CD8-positive, alpha-beta memory T cell (primary cell): ENCODE measurements at regions of chr5 and their contacts with region 1.

Region 1: DNA sequence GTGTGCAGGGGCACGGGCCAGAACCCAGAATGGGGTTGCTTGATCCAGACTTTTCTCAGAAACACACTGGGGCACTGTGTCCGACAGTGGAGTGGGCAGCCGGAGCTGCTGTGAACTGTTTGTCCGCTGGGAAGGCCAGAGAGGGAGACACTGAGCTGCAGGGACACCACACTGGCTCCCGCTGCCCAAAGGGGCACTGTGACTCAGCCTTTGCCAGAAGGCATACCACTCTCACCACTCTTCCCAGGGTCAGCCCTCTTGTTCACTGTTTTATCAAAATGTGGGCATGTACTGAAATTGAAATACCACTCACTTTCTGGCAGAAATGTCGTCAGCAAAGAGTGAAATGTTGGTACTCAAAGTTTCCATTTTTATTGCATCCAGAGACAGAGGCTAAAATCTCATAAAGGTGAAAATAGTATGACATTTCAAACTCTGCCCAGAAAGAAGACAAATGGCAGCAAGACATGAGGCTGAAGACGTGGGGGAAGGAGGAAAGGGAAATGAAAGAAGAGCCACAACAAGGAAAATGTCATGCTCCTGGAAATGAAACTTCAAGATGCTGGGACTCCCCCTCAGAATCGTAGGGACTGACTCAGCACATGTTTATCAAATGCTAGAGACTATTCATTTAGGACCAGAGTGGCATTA is 4.5 kb upstream of the IL7R start:
- DNase-seq: peak in 3 of 5 donors; percentile 57 to 70 (median 68)
- H3K4me3 ChIP-seq: peak overlapping the region; percentile 58
- H3K4me3 Mint-ChIP-seq: peak overlapping the region; percentile 90 to 97 (median 93)
- H3K27ac ChIP-seq: peak overlapping the region; percentile 95
- H3K27ac Mint-ChIP-seq: peak overlapping the region; percentile 94 to 100 (median 100)
- H3K4me1 ChIP-seq: peaks cover 59% of the 10 kb centered on the region
- H3K4me1 Mint-ChIP-seq: peaks cover 70 to 83% (median 72%) of the 10 kb centered on the region in 3 donors
- H3K27me3 ChIP-seq: no peaks in the 10 kb centered on the region
- H3K27me3 Mint-ChIP-seq: peaks cover 0 to 1% of the 10 kb centered on the region in 2 donors

Region 2: DNA sequence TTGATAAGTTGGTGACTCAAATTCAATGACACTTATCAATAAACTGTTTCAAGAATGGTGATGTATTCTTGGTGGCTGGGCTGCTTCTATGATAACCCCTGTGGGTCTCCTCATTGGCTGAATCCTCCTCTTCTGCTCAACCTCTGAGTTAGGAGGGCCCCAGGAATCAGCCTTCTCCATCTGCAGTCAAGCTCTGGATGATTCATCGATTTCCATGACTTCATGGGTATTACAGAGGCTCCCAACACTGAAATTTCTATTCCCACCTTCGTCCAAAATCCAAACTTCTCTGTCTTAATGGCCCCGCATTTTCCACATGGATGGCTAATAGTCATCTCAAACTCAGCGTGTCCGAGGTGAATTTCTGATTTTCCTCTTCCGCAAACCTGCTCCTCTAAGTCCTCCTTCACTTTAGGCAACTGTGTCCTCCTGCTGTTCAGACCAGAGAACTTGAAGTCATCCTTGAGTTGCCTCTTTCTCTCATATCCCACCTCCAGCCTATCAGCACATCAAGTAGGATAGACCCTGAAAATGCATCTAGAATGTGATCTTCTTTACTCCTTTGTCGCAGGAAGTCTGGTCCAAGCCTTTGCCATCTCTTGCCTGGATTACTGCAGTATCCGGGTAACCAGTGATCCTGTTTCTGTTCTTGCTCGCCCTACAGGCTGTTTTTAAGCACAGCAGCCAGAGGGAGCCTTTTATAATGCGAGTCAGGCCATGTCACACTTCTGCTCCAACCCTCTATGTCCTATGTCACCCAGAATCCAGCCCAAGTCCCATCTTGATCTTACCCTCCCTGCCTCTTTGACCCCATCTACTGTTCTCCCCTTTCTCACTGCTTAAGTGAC is 36.9 kb before region 1 on chr5:
- CTCF ChIA-PET with region 1: interaction called, 165 read pairs
- POLR2A ChIA-PET with region 1: interaction called, 125 read pairs
- DNase-seq: no peak
- H3K4me3 ChIP-seq: peak overlapping the region; percentile 28
- H3K4me3 Mint-ChIP-seq: no peak overlapping the region
- H3K27ac ChIP-seq: peak overlapping the region; percentile 10
- H3K27ac Mint-ChIP-seq: no peak overlapping the region
- H3K4me1 ChIP-seq: peaks cover 91% of the 10 kb centered on the region
- H3K4me1 Mint-ChIP-seq: peaks cover 19 to 49% (median 45%) of the 10 kb centered on the region in 3 donors
- H3K27me3 ChIP-seq: no peaks in the 10 kb centered on the region
- H3K27me3 Mint-ChIP-seq: no peaks in the 10 kb centered on the region

Region 3: GRCh38 chr5:35830587-35830986 is 21.6 kb before region 1 on chr5:
- CTCF ChIA-PET with region 1: interaction called, 165 read pairs
- POLR2A ChIA-PET with region 1: interaction called, 14 read pairs
- DNase-seq: peak in 2 of 5 donors; percentile 77 to 89
- H3K4me3 ChIP-seq: no peak overlapping the region
- H3K4me3 Mint-ChIP-seq: peak overlapping the region; percentile 24 to 66 (median 51)
- H3K27ac ChIP-seq: no peak overlapping the region
- H3K27ac Mint-ChIP-seq: peak overlapping the region; percentile 75 to 99 (median 83)
- H3K4me1 ChIP-seq: peaks cover 76% of the 10 kb centered on the region
- H3K4me1 Mint-ChIP-seq: peaks cover 9 to 95% (median 87%) of the 10 kb centered on the region in 3 donors
- H3K27me3 ChIP-seq: no peaks in the 10 kb centered on the region
- H3K27me3 Mint-ChIP-seq: peaks cover 0 to 2% of the 10 kb centered on the region in 2 donors

Region 4: GRCh38 chr5:35869685-35870277 is 17.6 kb after region 1 on chr5:
- CTCF ChIA-PET with region 1: interaction called, 4 read pairs
- POLR2A ChIA-PET with region 1: interaction called, 24 read pairs
- DNase-seq: no peak
- H3K4me3 ChIP-seq: no peak overlapping the region
- H3K4me3 Mint-ChIP-seq: peak overlapping the region; percentile 8 to 76 (median 50)
- H3K27ac ChIP-seq: no peak overlapping the region
- H3K27ac Mint-ChIP-seq: peak overlapping the region; percentile 71 to 99 (median 86)
- H3K4me1 ChIP-seq: peaks cover 77% of the 10 kb centered on the region
- H3K4me1 Mint-ChIP-seq: peaks cover 86 to 99% (median 94%) of the 10 kb centered on the region in 3 donors
- H3K27me3 ChIP-seq: no peaks in the 10 kb centered on the region
- H3K27me3 Mint-ChIP-seq: no peaks in the 10 kb centered on the region

Region 5: GRCh38 chr5:35938568-35939227 is 86.5 kb after region 1 on chr5 and contains the start of gene CAPSL:
- CTCF ChIA-PET with region 1: no interaction called
- POLR2A ChIA-PET with region 1: no interaction called
- DNase-seq: no peak
- H3K4me3 ChIP-seq: no peak within 1 kb of the TSS
- H3K4me3 Mint-ChIP-seq: no peak within 1 kb of the TSS
- H3K27ac ChIP-seq: no peak within 1 kb of the TSS
- H3K27ac Mint-ChIP-seq: no peak within 1 kb of the TSS
- H3K4me1 ChIP-seq: no peaks in the 10 kb centered on the region
- H3K4me1 Mint-ChIP-seq: no peaks in the 10 kb centered on the region
- H3K27me3 ChIP-seq: no peaks in the 10 kb centered on the region
- H3K27me3 Mint-ChIP-seq: peaks cover 11 to 31% of the 10 kb centered on the region in 2 donors
- total RNA-seq, gene CAPSL: 0.40 to 0.59 TPM